MCF 10A (cell line): ENCODE measurements at regions of chr3 and their contacts with region 1.

Region 1: GRCh38 chr3:188830893-188831292 is 340.9 kb upstream of the TPRG1 start:
- DNase-seq: peak; percentile 45
- H3K4me3 Mint-ChIP-seq: no peak overlapping the region
- H3K27ac Mint-ChIP-seq: no peak overlapping the region
- H3K4me1 Mint-ChIP-seq: peaks cover 21% of the 10 kb centered on the region
- H3K27me3 Mint-ChIP-seq: no peaks in the 10 kb centered on the region
- CTCF ChIP-seq: no peak

Region 2: GRCh38 chr3:188584162-188584529 is 246.7 kb before region 1 on chr3:
- CTCF ChIA-PET with region 1: no interaction called
- POLR2A ChIA-PET with region 1: interaction called, 12 read pairs
- intact Hi-C with region 1: no loop called
- DNase-seq: peak; percentile 78
- H3K4me3 Mint-ChIP-seq: peak overlapping the region; percentile 62
- H3K27ac Mint-ChIP-seq: no peak overlapping the region
- H3K4me1 Mint-ChIP-seq: peaks cover 26% of the 10 kb centered on the region
- H3K27me3 Mint-ChIP-seq: no peaks in the 10 kb centered on the region
- CTCF ChIP-seq: no peak

Region 3: GRCh38 chr3:188819939-188820338 is 11.0 kb before region 1 on chr3:
- CTCF ChIA-PET with region 1: interaction called, 6 read pairs
- POLR2A ChIA-PET with region 1: interaction called, 48 read pairs
- intact Hi-C with region 1: no loop called
- DNase-seq: peak; percentile 47
- H3K4me3 Mint-ChIP-seq: no peak overlapping the region
- H3K27ac Mint-ChIP-seq: peak overlapping the region; percentile 85
- H3K4me1 Mint-ChIP-seq: peaks cover 35% of the 10 kb centered on the region
- H3K27me3 Mint-ChIP-seq: no peaks in the 10 kb centered on the region
- CTCF ChIP-seq: no peak

Region 4: DNA sequence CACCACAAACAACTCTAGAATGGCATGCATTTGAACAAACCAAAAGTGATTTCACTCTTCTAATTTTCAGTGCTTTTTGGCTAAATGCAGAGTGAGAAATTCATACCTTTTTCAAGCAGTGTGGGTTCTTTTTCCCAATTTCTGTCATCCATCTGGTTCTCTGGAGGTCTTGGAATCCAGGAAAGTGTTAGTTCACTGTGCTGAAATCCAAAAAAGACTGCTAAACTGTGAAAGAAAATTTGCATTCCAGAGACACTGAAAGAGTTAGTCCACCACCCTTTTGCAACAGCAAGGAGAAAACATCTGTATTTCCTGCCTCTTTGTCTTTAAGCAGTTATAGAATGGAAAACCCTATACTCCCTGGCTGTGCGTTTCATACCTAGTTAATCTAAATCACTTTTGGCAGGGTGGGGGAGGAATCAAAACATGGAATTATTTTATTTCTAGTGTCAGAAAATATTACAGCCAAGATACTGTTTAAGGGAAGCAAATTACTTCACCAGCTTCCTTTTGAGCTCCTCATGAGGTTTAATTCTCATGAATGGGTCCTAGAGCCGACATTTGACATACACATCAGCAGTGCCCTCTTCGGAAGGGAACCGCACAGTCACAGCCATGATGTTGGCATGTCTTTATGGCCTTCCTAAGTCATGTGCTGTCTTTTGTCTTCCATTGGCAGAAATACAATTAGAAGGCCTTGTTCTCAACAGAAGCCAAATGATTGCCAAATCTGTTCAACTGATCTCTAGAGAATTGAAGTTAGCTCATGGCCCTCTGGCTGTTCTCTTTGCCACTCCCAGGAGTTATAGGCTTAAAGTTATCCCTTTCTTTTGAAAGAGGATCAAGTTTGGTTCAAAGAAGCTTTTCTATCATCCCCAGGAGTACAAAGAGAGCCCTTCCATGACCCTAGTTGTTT is 23.2 kb after region 1 on chr3:
- CTCF ChIA-PET with region 1: interaction called, 6 read pairs
- POLR2A ChIA-PET with region 1: interaction called, 30 read pairs
- intact Hi-C with region 1: no loop called
- DNase-seq: peak; percentile 73
- H3K4me3 Mint-ChIP-seq: peak overlapping the region; percentile 50
- H3K27ac Mint-ChIP-seq: peak overlapping the region; percentile 87
- H3K4me1 Mint-ChIP-seq: peaks cover 26% of the 10 kb centered on the region
- H3K27me3 Mint-ChIP-seq: no peaks in the 10 kb centered on the region
- CTCF ChIP-seq: no peak